Mucosa of descending colon (tissue), 3 donors: ENCODE measurements at regions of chr7 and their contacts with region 1.

Region 1: DNA sequence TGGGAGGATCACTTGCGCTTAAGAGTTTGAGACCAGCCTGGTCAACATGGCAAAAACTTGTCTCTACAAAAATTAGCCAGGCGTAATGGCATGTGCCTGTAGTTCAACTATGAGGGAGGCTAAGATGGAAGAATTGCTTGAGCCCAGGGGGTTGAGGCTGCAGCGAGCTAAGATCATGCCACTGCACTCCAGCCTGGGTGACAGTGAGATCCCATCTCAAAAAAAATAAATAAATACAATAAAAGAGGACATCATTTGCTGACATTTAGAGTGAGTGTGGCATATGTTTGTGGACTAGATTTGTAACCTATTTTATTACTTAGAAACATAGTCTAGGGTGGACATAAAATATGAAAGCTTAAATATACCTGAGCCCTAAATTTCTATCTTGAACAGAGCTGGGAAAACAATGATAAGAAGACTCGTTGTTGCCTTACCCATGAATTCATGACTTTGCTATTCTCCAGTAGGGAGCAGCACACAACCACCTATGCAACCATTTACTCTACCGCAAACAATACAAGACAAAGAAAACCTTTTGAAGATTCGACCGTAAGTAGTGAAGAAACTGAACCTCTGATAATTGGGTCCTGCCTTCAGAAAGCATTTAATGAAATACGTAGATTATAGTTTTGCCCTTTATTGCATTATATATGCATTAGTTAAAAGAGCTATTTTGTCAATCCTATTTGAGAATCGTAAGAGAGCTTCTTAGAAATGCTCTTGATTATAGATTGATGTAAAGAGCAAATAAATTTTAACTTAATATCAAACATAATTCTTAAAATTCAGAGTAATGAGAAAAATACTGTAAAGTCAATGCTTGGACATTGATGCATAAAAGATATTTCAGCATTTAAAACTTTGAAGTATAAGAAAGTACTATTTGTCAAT is 83.5 kb downstream of the GNAT3 start:
- DNase-seq: peak in 1 of 3 donors; percentile 51
- ATAC-seq: peak; percentile 76
- H3K4me3 ChIP-seq: no peak overlapping the region
- H3K4me1 ChIP-seq: no peaks in the 10 kb centered on the region
- CTCF ChIP-seq: no peak

Region 2: GRCh38 chr7:80659120-80660055 is 231.0 kb after region 1 on chr7:
- intact Hi-C with region 1: loop called (anchors 5 to 10 kb)
- DNase-seq: no peak
- ATAC-seq: peak; percentile 34
- H3K4me3 ChIP-seq: no peak overlapping the region
- H3K4me1 ChIP-seq: no peaks in the 10 kb centered on the region
- CTCF ChIP-seq: peak; percentile 65

Region 3: DNA sequence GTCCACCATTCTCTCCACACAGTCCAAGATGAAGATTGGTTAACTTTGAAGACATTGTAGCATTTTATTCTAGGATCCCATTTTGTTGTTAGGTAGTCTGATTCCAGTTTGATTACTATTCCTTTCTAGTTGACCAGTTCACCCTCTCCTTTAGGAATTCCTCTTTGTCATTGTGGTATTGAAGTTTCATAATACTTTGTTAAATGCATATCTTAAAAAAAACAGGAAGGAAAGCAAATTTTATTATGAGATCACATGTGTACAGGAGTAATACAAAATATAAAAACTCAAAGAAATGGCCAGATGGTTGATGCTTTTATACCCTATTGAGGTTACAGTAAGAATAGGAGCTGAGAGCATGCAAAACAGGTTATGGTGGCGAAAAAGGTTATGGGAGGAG is 505.9 kb after region 1 on chr7:
- intact Hi-C with region 1: no loop called
- DNase-seq: no peak
- ATAC-seq: no peak
- H3K4me3 ChIP-seq: no peak overlapping the region
- H3K4me1 ChIP-seq: no peaks in the 10 kb centered on the region
- CTCF ChIP-seq: no peak